ENCODE measurements at regions of chr9 and their contacts with region 1.

Region 1: DNA sequence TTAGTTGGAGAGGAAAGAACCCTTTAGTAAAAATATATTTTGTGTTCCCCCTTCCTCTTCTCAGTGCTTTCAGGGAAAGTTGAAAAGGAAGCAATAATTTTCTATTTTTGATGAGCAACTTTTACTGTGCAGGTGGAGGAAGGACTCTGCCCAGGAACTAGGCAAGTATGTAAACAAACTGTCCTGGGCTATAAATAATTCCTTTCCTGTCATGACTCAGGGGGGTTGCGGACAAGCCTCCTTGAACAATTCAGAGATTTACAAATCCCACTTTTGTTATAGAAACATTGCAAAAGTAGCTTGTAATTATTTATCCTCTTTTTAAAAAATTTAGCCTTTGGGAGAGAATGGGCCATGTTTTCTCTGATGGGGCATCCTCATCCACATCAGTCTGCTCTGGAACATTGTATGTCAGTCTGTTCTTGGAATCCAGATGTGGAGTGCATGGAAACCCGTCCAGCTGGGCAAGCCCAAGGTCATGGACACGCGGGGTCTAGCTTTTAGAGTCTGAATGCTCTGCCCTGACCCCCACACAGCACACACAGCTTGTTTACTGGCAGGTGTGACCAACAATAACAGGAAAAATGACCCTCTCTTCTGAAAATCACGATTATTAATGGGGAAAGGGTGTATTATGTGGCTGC is 127.6 kb downstream of the GADD45G start:
- DNase-seq: peak; percentile 10
- H3K4me3 ChIP-seq: no peak overlapping the region
- H3K27ac ChIP-seq: no peak overlapping the region
- H3K4me1 ChIP-seq: peaks cover 11% of the 10 kb centered on the region
- H3K27me3 ChIP-seq: no peaks in the 10 kb centered on the region
- CTCF ChIP-seq: no peak
- POLR2A ChIP-seq: no peak

Region 2: GRCh38 chr9:89675058-89675742 is 57.2 kb before region 1 on chr9:
- CTCF ChIA-PET with region 1: no interaction called
- POLR2A ChIA-PET with region 1: no interaction called
- dilution Hi-C with region 1: no loop called
- intact Hi-C with region 1: no loop called
- DNase-seq: no peak
- H3K4me3 ChIP-seq: no peak overlapping the region
- H3K27ac ChIP-seq: no peak overlapping the region
- H3K4me1 ChIP-seq: no peaks in the 10 kb centered on the region
- H3K27me3 ChIP-seq: no peaks in the 10 kb centered on the region
- CTCF ChIP-seq: no peak
- POLR2A ChIP-seq: no peak

Region 3: GRCh38 chr9:89815903-89816573 is 83.6 kb after region 1 on chr9:
- CTCF ChIA-PET with region 1: no interaction called
- POLR2A ChIA-PET with region 1: no interaction called
- dilution Hi-C with region 1: no loop called
- intact Hi-C with region 1: loop called (anchors 2 kb)
- DNase-seq: no peak
- H3K4me3 ChIP-seq: no peak overlapping the region
- H3K27ac ChIP-seq: no peak overlapping the region
- H3K4me1 ChIP-seq: peaks cover 15% of the 10 kb centered on the region
- H3K27me3 ChIP-seq: no peaks in the 10 kb centered on the region
- CTCF ChIP-seq: no peak
- POLR2A ChIP-seq: no peak

Measured in endothelial cell of umbilical vein (primary cell).